Caco-2 (cell line): ENCODE measurements at regions of chr22 and their contacts with region 1.

Region 1: GRCh38 chr22:41041532-41041931 is 50.9 kb upstream of the EP300 start:
- DNase-seq: no peak
- H3K4me3 ChIP-seq: no peak overlapping the region
- H3K4me3 Mint-ChIP-seq: no peak overlapping the region
- H3K27ac Mint-ChIP-seq: no peak overlapping the region
- H3K4me1 ChIP-seq: no peaks in the 10 kb centered on the region
- H3K4me1 Mint-ChIP-seq: no peaks in the 10 kb centered on the region
- H3K27me3 ChIP-seq: no peaks in the 10 kb centered on the region
- H3K27me3 Mint-ChIP-seq: no peaks in the 10 kb centered on the region
- CTCF ChIP-seq: no peak

Region 2: GRCh38 chr22:41015003-41015402 is 26.5 kb before region 1 on chr22:
- CTCF ChIA-PET with region 1: no interaction called
- POLR2A ChIA-PET with region 1: no interaction called
- intact Hi-C with region 1: no loop called
- DNase-seq: no peak
- H3K4me3 ChIP-seq: no peak overlapping the region
- H3K4me3 Mint-ChIP-seq: no peak overlapping the region
- H3K27ac Mint-ChIP-seq: no peak overlapping the region
- H3K4me1 ChIP-seq: no peaks in the 10 kb centered on the region
- H3K4me1 Mint-ChIP-seq: peaks cover 6% of the 10 kb centered on the region
- H3K27me3 ChIP-seq: no peaks in the 10 kb centered on the region
- H3K27me3 Mint-ChIP-seq: no peaks in the 10 kb centered on the region
- CTCF ChIP-seq: no peak

Region 3: GRCh38 chr22:41725510-41726110 is 684.1 kb after region 1 on chr22:
- CTCF ChIA-PET with region 1: no interaction called
- POLR2A ChIA-PET with region 1: interaction called, 16 read pairs
- intact Hi-C with region 1: no loop called
- DNase-seq: peak; percentile 34 to 51
- H3K4me3 ChIP-seq: no peak overlapping the region
- H3K4me3 Mint-ChIP-seq: no peak overlapping the region
- H3K27ac Mint-ChIP-seq: no peak overlapping the region
- H3K4me1 ChIP-seq: no peaks in the 10 kb centered on the region; the same call in 1 of the 2 replicates
- H3K4me1 Mint-ChIP-seq: no peaks in the 10 kb centered on the region
- H3K27me3 ChIP-seq: no peaks in the 10 kb centered on the region
- H3K27me3 Mint-ChIP-seq: no peaks in the 10 kb centered on the region
- CTCF ChIP-seq: no peak